Activated T-helper 1 cell treated with anti-CD3 and anti-CD28 coated beads, Interleukin-12 subunit alpha, Interleukin-12 subunit beta, Interleukin-2, Interleukin-4 antibody, amounts not matched to agents 30 ng/mL and 10 ng/mL and 1 ng/mL, durations not matched to agents 14 hours and 24 hours and 36 hours (primary cell): ENCODE measurements at regions of chr19 and their contacts with region 1.

Region 1: DNA sequence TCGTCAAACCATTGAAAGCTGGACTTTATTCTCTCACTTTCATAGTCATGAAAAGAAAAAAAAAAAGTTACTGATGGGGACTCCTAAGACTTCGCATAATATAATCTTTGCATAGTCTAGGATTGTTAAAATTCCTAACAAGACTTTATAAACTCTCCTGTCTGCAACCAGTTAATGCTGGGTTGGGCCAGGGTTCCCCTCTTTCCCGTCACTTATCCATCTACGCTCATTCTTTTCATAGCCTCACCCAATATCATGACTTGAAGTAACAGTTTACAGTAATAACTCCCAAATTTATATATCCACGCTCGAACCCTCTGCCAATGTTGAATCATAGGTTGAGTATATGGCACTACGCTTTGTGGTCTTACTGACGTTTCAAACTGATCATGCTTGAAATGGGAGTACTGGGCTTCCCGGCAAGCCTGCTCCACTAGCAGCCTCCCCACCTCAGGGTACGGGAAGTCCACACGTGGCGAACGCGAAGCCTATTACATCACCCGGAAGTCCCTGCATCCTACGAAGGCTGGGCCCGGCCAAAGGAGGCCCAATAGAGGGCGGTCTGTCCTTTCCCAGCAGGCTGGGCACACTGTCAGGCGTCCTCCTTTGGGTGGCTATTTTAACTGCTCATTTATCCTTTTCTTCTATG is 743 bp upstream of the ZNF460 start:
- DNase-seq: peak; percentile 75
- H3K4me3 Mint-ChIP-seq: no peak overlapping the region
- H3K27ac Mint-ChIP-seq: no peak overlapping the region
- H3K4me1 Mint-ChIP-seq: peaks cover 23% of the 10 kb centered on the region
- H3K27me3 Mint-ChIP-seq: peaks cover 2% of the 10 kb centered on the region

Region 2: GRCh38 chr19:57191141-57192076 is 88.1 kb before region 1 on chr19 and contains the start of gene ZNF264:
- intact Hi-C with region 1: loop called (anchors 2 kb)
- DNase-seq: peak; percentile 86
- H3K4me3 Mint-ChIP-seq: peak within 1 kb of the TSS; percentile 94
- H3K27ac Mint-ChIP-seq: peak within 1 kb of the TSS; percentile 85
- H3K4me1 Mint-ChIP-seq: peaks cover 24% of the 10 kb centered on the region
- H3K27me3 Mint-ChIP-seq: no peaks in the 10 kb centered on the region
- total RNA-seq, gene ZNF264: 16.1 and 18.3 TPM in 2 replicates

Region 3: GRCh38 chr19:57350877-57351805 is 71.6 kb after region 1 on chr19 and contains the start of gene ZNF304:
- intact Hi-C with region 1: loop called (anchors 1 kb)
- DNase-seq: peak; percentile 84
- H3K4me3 Mint-ChIP-seq: peak within 1 kb of the TSS; percentile 92
- H3K27ac Mint-ChIP-seq: peak within 1 kb of the TSS; percentile 90
- H3K4me1 Mint-ChIP-seq: peaks cover 29% of the 10 kb centered on the region
- H3K27me3 Mint-ChIP-seq: no peaks in the 10 kb centered on the region
- total RNA-seq, gene ZNF304: 6.1 and 6.6 TPM in 2 replicates